PC-9 (cell line): ENCODE measurements at regions of chr17 and their contacts with region 1.

Region 1: DNA sequence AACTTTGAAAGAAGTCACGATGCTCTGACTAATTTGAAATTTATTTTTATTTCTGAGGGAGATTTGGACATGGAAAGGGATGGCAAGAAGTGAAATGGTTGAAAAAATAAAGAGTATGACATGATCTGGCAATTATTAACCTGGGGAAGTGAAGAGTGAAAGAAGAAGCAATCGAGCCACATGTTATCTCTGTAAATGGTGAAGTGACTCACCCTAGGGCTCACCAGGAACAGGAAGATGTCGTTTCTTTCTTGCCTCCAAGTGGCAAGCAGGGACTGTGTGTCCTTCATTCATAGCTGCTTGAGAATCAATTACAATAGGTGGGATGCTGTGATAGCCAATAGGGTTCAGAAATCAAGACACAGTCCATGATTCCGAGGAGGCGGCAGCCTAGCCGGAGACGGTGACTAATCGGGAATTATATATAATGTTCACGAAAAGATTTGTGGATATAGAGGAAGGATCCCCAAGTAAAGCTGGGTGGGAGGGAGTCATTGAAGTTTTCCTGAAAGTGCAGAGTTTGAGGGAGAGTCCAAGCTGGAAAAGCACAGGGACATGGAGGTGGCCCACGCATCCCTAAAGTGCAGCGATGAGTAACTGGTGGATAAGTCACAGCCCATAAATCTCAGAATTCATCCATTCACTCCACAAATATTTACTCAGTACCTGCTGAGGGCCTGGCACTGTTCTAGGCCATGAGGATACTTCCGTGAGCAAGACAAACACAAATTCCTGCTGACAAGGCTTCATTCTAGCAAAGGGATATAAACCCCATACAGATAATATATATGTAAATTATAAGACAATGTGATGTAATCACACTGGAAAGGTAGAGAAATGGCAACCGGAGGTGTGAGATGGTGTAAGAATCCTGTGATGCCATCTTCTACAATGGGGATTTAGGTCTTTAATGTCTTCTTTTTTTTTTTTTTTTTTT is 18.4 kb upstream of the KRT20 start:
- DNase-seq: peak in 1 of 2 experiments; percentile 96
- H3K4me3 ChIP-seq: peak overlapping the region; percentile 24; the same call in 1 of the 2 replicates
- H3K27ac ChIP-seq: peak overlapping the region; percentile 98
- H3K4me1 ChIP-seq: peaks cover 51% of the 10 kb centered on the region
- H3K27me3 ChIP-seq: no peaks in the 10 kb centered on the region
- CTCF ChIP-seq: no peak

Region 2: DNA sequence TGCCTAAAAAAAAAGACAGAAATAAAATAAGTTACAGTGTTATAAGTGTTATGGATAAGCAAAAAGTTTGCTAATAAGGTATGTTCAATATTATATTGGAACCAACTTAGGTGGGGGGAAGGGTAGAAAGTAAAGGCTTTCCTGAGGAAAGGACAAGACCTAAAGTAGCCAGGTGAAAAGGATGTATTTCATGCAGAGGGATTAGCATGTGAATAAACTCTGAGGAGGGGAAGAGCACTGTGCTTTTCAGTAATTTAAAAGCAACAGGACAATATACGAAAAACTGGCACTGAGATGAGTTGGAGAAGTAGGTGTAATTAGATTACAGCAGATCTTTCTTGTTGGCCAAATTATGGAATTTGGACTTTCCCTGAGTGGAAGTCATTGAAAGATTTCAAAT is 493.3 kb before region 1 on chr17:
- CTCF ChIA-PET with region 1: no interaction called
- POLR2A ChIA-PET with region 1: interaction called, 10 read pairs
- intact Hi-C with region 1: no loop called
- DNase-seq: no peak
- H3K4me3 ChIP-seq: no peak overlapping the region
- H3K27ac ChIP-seq: no peak overlapping the region
- H3K4me1 ChIP-seq: peaks cover under 1% of the 10 kb centered on the region; the same call in 1 of the 2 replicates
- H3K27me3 ChIP-seq: no peaks in the 10 kb centered on the region
- CTCF ChIP-seq: no peak

Region 3: GRCh38 chr17:40859536-40859935 is 43.9 kb before region 1 on chr17:
- CTCF ChIA-PET with region 1: interaction called, 9 read pairs
- POLR2A ChIA-PET with region 1: interaction called, 25 read pairs
- intact Hi-C with region 1: loop called (anchors 2 kb)
- DNase-seq: no peak
- H3K4me3 ChIP-seq: no peak overlapping the region
- H3K27ac ChIP-seq: no peak overlapping the region
- H3K4me1 ChIP-seq: peaks cover 19% of the 10 kb centered on the region
- H3K27me3 ChIP-seq: no peaks in the 10 kb centered on the region
- CTCF ChIP-seq: no peak

Region 4: GRCh38 chr17:41008805-41009204 is 105.4 kb after region 1 on chr17 and contains the start of gene KRTAP3-1:
- CTCF ChIA-PET with region 1: no interaction called
- POLR2A ChIA-PET with region 1: no interaction called
- intact Hi-C with region 1: no loop called
- DNase-seq: no peak
- H3K4me3 ChIP-seq: no peak within 1 kb of the TSS
- H3K27ac ChIP-seq: peak within 1 kb of the TSS; percentile 59
- H3K4me1 ChIP-seq: peaks cover 51% of the 10 kb centered on the region
- H3K27me3 ChIP-seq: no peaks in the 10 kb centered on the region
- CTCF ChIP-seq: no peak
- total RNA-seq, gene KRTAP3-1: not detected in 2 replicates

Region 5: DNA sequence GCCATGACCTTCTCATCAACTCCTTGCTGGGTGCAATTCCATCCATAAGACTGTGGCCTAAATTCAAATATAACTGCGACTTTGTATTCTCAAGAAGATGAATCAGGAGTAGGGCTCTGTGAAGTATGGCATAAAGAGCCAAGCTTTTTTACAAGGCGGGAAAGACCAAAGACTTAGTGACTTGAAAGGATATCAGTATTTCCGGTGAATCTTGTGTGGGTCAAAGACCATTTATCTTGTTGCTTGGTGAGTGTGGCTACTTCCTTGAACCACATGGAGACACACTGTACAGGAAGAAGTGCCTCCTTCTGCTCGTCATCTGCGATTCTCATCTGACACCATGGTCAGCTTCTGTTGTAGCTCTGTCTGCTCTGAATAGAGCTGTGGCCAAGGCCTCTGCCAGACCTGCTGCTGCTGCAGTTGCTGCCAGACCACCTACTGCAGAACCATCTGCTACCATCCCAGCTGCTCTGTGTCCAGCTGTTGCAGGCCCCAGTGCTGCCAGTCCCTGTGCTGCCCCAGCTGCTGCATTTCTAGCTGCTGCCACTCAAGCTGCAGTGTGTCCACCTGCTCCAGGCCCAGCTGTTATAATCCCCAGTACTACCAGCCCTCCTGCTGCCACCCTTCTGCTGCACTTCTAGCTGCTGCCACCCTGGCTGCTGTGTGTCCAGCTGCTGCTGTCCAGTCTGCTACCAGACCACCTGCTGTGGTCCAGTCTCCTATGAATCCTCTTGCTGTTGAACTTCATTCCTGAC is 168.4 kb after region 1 on chr17:
- CTCF ChIA-PET with region 1: no interaction called
- POLR2A ChIA-PET with region 1: no interaction called
- intact Hi-C with region 1: no loop called
- DNase-seq: no peak
- H3K4me3 ChIP-seq: no peak overlapping the region
- H3K27ac ChIP-seq: no peak overlapping the region
- H3K4me1 ChIP-seq: peaks cover 2% of the 10 kb centered on the region; the same call in 1 of the 2 replicates
- H3K27me3 ChIP-seq: no peaks in the 10 kb centered on the region
- CTCF ChIP-seq: no peak

Region 6: GRCh38 chr17:41153856-41154255 is 250.5 kb after region 1 on chr17:
- CTCF ChIA-PET with region 1: no interaction called
- POLR2A ChIA-PET with region 1: interaction called, 17 read pairs
- intact Hi-C with region 1: no loop called
- DNase-seq: no peak
- H3K4me3 ChIP-seq: no peak overlapping the region
- H3K27ac ChIP-seq: no peak overlapping the region
- H3K4me1 ChIP-seq: no peaks in the 10 kb centered on the region
- H3K27me3 ChIP-seq: no peaks in the 10 kb centered on the region
- CTCF ChIP-seq: no peak

Region 7: GRCh38 chr17:41777574-41778188 is 874.3 kb after region 1 on chr17:
- CTCF ChIA-PET with region 1: no interaction called
- POLR2A ChIA-PET with region 1: interaction called, 10 read pairs
- intact Hi-C with region 1: no loop called
- DNase-seq: peak; percentile 51 to 58
- H3K4me3 ChIP-seq: no peak overlapping the region
- H3K27ac ChIP-seq: peak overlapping the region; percentile 49
- H3K4me1 ChIP-seq: peaks cover 56% of the 10 kb centered on the region
- H3K27me3 ChIP-seq: no peaks in the 10 kb centered on the region
- CTCF ChIP-seq: no peak